Activated CD4-positive, alpha-beta T cell treated with anti-CD3 and anti-CD28 coated beads, Interleukin-2, amount 10 ng/mL, durations not matched to agents 24 days and 14 days (primary cell): ENCODE measurements at regions of chr17 and their contacts with region 1.

Region 1: DNA sequence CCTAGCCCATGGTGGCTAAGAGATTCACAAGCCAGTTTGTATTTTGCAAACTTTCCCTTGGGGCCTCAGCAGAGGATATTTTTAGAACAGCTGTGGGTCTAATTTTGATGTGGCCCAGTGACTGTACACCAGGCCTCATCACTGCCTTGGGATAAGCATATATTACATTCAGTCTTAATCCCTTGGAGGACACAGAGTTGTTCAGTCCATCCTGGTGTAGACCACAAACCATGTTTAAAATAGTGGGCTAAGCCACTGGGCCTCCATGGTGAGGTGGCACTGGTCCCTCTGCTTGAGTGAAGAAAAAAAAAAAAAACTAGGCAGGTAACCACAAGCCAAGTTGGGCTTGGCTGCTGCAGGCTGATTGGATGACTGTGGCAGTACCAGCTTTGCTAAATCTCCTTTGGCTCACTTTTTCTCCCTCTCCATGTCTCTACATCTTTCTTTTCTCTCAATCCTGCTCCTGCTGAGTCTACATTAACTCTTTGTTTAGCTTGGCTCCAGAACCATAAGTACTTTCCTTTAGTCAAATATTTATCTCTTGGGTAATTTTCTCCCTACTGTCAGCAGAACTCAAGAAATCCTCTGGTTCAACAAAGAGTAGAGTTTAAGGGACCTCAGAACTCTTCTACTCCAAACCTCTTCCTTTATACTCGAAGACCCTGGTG is 120.0 kb upstream of the TBX2 start:
- DNase-seq: no peak
- H3K4me3 Mint-ChIP-seq: no peak overlapping the region
- H3K27ac Mint-ChIP-seq: no peak overlapping the region
- H3K4me1 Mint-ChIP-seq: peaks cover 20% of the 10 kb centered on the region
- H3K27me3 Mint-ChIP-seq: no peaks in the 10 kb centered on the region

Region 2: GRCh38 chr17:61196302-61196704 is 83.3 kb before region 1 on chr17:
- intact Hi-C with region 1: no loop called
- DNase-seq: no peak
- H3K4me3 Mint-ChIP-seq: no peak overlapping the region
- H3K27ac Mint-ChIP-seq: no peak overlapping the region
- H3K4me1 Mint-ChIP-seq: no peaks in the 10 kb centered on the region
- H3K27me3 Mint-ChIP-seq: no peaks in the 10 kb centered on the region

Region 3: DNA sequence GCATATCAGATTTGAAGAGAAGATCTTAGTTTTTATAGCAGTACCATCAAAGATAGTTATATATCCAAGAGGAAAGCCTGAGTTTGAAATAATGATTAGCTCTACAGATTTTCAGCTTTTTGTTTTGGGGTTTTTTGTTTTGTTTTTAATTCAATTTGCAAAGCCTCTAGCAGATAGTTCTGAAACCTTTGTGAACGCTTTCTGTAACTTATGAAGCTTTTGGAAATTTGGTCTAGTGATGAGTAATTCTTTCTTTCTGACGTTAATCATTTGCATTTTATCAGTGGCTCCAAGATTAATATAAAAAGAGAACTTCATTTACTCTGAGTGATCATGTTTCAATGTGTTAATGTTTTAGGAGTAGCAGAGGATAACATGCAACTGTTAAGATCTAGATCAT is 40.3 kb before region 1 on chr17:
- intact Hi-C with region 1: loop called (anchors 5 kb)
- DNase-seq: no peak
- H3K4me3 Mint-ChIP-seq: peak overlapping the region; percentile 11
- H3K27ac Mint-ChIP-seq: peak overlapping the region; percentile 7
- H3K4me1 Mint-ChIP-seq: peaks cover 9% of the 10 kb centered on the region
- H3K27me3 Mint-ChIP-seq: no peaks in the 10 kb centered on the region